ENCODE measurements at regions of chr6 and their contacts with region 1.

Region 1: DNA sequence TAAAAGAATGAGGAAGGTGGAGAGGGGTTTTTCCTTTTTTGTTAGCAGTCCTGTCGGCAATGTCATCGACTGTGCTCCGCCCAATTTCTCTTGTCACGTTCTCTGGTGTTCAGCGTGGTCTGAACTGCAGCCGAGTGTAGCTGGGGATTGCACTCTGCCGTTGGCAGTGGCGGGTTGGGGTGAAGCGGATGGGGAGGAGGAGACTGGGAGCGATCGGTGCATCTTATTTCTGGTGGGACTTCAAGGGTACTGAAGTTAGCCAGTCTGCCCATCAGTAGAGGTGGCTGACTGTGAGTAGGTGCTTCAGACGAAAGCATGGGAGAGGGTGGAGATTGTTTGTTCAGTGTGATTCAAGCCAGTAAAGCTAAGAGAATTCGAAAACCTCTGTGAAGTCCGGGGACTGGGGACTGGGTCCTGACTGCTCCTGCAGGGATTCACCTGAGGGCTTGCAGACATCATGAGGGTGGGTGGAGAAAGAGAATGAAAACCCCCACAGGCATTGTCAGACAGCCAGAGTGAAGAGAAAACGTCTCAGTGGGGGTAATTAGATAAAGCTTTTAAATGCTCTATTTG is 5.1 kb downstream of the RREB1 start:
- DNase-seq: no peak
- ATAC-seq: peak; percentile 57
- H3K4me3 ChIP-seq: peak overlapping the region; percentile 15 to 23; a peak in 2 of 4 replicates
- H3K27ac ChIP-seq: peak overlapping the region; percentile 25
- H3K4me1 ChIP-seq: peaks cover 66% of the 10 kb centered on the region
- H3K27me3 ChIP-seq: no peaks in the 10 kb centered on the region
- CTCF ChIP-seq: no peak

Region 2: DNA sequence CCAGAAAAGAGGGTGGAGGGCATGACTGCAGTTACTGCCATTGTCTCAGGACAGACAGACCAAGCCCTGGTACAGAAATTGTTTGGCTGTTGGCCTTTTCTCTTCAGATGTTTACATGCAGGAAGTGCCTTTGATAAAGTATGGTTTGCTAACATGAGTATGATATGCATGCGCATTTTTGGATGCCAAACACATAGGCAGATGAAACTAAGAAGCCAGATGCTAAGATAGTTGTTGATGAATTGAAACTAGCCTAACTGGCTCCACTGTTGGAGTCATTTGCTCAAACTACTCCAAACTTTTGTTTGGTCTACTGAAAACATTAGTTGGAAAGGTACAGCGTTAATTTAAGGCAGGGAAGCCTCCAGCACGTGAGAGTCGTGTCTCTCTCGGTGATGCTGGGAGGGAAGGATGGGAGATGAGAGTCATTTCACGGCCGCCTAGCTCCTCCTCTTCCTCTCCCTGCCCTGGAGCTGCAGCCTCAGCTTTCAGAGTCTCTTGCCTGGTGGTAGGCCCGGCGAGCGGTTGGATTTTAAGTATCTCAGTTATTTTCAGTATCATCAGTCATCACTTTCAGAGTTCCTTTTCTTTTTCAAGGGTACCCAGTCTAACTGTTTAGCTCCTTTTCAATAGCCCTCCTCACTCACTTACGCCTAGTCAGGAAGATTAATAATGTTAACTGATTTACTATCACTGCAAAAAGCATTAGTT is 24.7 kb after region 1 on chr6:
- CTCF ChIA-PET with region 1: no interaction called
- POLR2A ChIA-PET with region 1: interaction called, 13 read pairs
- in situ Hi-C with region 1: no loop called
- intact Hi-C with region 1: loop called (anchors 2 kb)
- DNase-seq: no peak
- ATAC-seq: peak; percentile 69
- H3K4me3 ChIP-seq: peak overlapping the region; percentile 14 to 33
- H3K27ac ChIP-seq: peak overlapping the region; percentile 94
- H3K4me1 ChIP-seq: peaks cover 68% of the 10 kb centered on the region
- H3K27me3 ChIP-seq: no peaks in the 10 kb centered on the region
- CTCF ChIP-seq: no peak

Region 3: DNA sequence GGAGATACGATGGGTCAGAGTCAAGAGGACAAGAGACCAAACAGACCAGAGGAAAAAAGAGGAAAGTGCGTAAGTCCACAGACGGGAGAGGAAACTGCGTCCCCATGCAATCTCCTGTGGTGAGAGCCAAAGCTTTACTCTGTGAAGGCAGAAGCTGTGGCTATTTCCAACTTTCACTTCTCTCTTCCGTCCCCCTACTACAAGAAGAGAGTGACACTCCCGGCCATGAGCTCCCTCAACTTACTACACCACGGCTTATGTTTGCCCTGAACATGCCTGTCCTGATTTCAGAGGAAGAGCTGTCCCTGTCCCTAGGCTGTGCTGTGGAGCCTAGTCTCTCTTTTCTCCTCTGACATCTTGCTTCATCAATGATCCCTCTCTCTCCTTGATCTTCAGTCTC is 211.7 kb after region 1 on chr6:
- CTCF ChIA-PET with region 1: no interaction called
- POLR2A ChIA-PET with region 1: no interaction called
- in situ Hi-C with region 1: no loop called
- intact Hi-C with region 1: no loop called
- DNase-seq: no peak
- ATAC-seq: no peak; the same call in 1 of the 2 replicates
- H3K4me3 ChIP-seq: no peak overlapping the region
- H3K27ac ChIP-seq: no peak overlapping the region
- H3K4me1 ChIP-seq: no peaks in the 10 kb centered on the region
- H3K27me3 ChIP-seq: peaks cover 2% of the 10 kb centered on the region; the same call in 1 of the 2 replicates
- CTCF ChIP-seq: no peak